CD4-positive, alpha-beta memory T cell (primary cell): ENCODE measurements at regions of chr1 and their contacts with region 1.

Region 1: GRCh38 chr1:91021686-91022517 is at the start of gene ZNF644:
- DNase-seq: peak; percentile 92 to 98 (median 94)
- H3K4me3 ChIP-seq: peak within 1 kb of the TSS; percentile 57 to 88
- H3K4me3 Mint-ChIP-seq: peak within 1 kb of the TSS; percentile 88 to 96 (median 95)
- H3K27ac ChIP-seq: peak within 1 kb of the TSS; percentile 99
- H3K27ac Mint-ChIP-seq: peak within 1 kb of the TSS; percentile 84 to 99 (median 98)
- H3K4me1 ChIP-seq: peaks cover 56% of the 10 kb centered on the region
- H3K4me1 Mint-ChIP-seq: peaks cover 35 to 72% (median 54%) of the 10 kb centered on the region in 4 donors
- H3K27me3 ChIP-seq: no peaks in the 10 kb centered on the region
- H3K27me3 Mint-ChIP-seq: no peaks in the 10 kb centered on the region
- total RNA-seq, gene ZNF644: 72.7 to 76.3 TPM

Region 2: DNA sequence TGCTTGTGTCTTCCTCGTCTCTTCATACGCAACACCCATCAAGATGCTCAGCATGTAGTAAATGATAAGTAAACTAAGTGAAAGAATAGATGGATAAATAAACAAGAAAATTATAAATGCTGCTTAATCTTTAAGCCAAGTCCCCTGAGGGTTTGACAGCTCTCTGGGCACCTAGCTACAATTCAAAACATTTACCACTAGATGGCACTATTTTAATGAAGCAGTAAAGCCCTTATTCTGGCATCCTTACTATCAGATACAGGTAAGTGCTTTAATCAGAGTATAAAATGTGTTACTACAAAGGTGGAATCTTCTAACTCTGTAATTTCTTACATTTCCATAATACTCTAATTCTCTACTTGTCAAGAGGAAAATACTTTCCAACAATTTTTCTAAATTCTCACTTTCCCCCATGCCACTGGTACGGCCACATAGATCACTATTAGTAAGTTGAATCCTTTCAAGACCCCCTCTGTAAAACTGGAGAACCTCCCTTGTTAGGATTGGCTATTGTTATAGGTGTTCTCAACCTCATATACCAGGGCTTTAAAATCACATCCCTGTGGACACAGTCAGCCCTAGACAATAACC is 442.6 kb before region 1 on chr1:
- CTCF ChIA-PET with region 1: no interaction called
- POLR2A ChIA-PET with region 1: no interaction called
- intact Hi-C with region 1: loop called (anchors 5 kb)
- DNase-seq: peak in 4 of 5 donors; percentile 35 to 41 (median 38)
- H3K4me3 ChIP-seq: no peak overlapping the region
- H3K4me3 Mint-ChIP-seq: no peak overlapping the region
- H3K27ac ChIP-seq: no peak overlapping the region
- H3K27ac Mint-ChIP-seq: no peak overlapping the region
- H3K4me1 ChIP-seq: no peaks in the 10 kb centered on the region
- H3K4me1 Mint-ChIP-seq: no peaks in the 10 kb centered on the region
- H3K27me3 ChIP-seq: no peaks in the 10 kb centered on the region
- H3K27me3 Mint-ChIP-seq: peaks cover 1 to 8% of the 10 kb centered on the region in 2 donors

Region 3: GRCh38 chr1:90850898-90851710 is 170.8 kb before region 1 on chr1:
- CTCF ChIA-PET with region 1: no interaction called
- POLR2A ChIA-PET with region 1: no interaction called
- intact Hi-C with region 1: loop called (anchors 5 kb)
- DNase-seq: peak; percentile 63 to 68 (median 67)
- H3K4me3 ChIP-seq: peak overlapping the region; percentile 52 to 71
- H3K4me3 Mint-ChIP-seq: peak overlapping the region; percentile 79 to 88 (median 84)
- H3K27ac ChIP-seq: no peak overlapping the region
- H3K27ac Mint-ChIP-seq: no peak overlapping the region
- H3K4me1 ChIP-seq: peaks cover 17% of the 10 kb centered on the region
- H3K4me1 Mint-ChIP-seq: peaks cover 8 to 14% (median 13%) of the 10 kb centered on the region in 4 donors
- H3K27me3 ChIP-seq: peaks cover 10% of the 10 kb centered on the region
- H3K27me3 Mint-ChIP-seq: peaks cover 23 to 27% of the 10 kb centered on the region in 2 donors

Region 4: GRCh38 chr1:91500756-91501522 is 479.0 kb after region 1 on chr1 and contains the start of gene CDC7:
- CTCF ChIA-PET with region 1: no interaction called
- POLR2A ChIA-PET with region 1: no interaction called
- intact Hi-C with region 1: loop called (anchors 2 kb)
- DNase-seq: peak; percentile 69 to 87 (median 81)
- H3K4me3 ChIP-seq: peak within 1 kb of the TSS; percentile 62 to 81
- H3K4me3 Mint-ChIP-seq: no peak within 1 kb of the TSS
- H3K27ac ChIP-seq: peak within 1 kb of the TSS; percentile 75
- H3K27ac Mint-ChIP-seq: no peak within 1 kb of the TSS
- H3K4me1 ChIP-seq: peaks cover 31% of the 10 kb centered on the region
- H3K4me1 Mint-ChIP-seq: peaks cover 18 to 25% (median 21%) of the 10 kb centered on the region in 4 donors
- H3K27me3 ChIP-seq: no peaks in the 10 kb centered on the region
- H3K27me3 Mint-ChIP-seq: no peaks in the 10 kb centered on the region
- total RNA-seq, gene CDC7: 4.7 to 6.0 TPM